Activated CD4-positive, alpha-beta memory T cell treated with anti-CD3 and anti-CD28 coated beads, Interleukin-2, amount 10 ng/mL, durations not matched to agents 7 days and 5 days (primary cell): ENCODE measurements at regions of chr16 and their contacts with region 1.

Region 1: DNA sequence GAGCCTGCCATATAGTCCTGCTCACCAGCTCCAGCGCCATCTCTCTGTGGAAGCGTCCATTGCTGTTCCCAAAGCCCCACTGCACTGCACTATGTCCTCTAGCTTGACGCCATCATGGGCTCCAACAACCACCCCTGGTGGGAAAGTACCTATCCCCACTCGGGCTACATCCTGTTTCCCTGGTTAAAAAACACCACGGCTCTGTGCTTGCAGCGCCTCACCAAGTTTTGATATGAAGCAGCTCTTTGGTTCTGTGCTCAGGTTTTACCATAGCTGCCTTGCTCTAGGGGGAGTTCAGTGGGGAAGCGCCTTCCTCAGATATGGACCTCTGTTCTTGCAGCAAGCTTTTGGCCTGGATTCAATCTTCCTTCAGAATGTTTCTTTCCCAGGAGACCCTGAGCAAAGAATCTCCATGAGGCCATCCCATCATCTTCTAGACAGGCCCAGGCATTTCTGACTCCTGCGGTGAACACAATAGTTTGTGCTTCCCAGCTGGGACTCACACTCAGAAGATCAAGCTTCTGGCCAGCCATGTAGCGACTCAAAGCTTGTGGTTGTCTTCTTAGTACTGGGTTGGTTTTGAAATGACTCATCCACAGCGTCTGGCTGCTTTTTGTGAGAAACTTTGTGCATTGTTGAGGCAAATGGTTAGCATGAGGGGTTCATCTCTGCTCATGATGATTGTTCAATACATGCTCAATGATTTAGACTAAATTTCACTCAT is 39.5 kb downstream of the DYNLRB2 start:
- DNase-seq: peak; percentile 85
- H3K4me3 Mint-ChIP-seq: peak overlapping the region; percentile 69
- H3K27ac Mint-ChIP-seq: peak overlapping the region; percentile 99
- H3K4me1 Mint-ChIP-seq: peaks cover 64% of the 10 kb centered on the region
- H3K27me3 Mint-ChIP-seq: no peaks in the 10 kb centered on the region

Region 2: DNA sequence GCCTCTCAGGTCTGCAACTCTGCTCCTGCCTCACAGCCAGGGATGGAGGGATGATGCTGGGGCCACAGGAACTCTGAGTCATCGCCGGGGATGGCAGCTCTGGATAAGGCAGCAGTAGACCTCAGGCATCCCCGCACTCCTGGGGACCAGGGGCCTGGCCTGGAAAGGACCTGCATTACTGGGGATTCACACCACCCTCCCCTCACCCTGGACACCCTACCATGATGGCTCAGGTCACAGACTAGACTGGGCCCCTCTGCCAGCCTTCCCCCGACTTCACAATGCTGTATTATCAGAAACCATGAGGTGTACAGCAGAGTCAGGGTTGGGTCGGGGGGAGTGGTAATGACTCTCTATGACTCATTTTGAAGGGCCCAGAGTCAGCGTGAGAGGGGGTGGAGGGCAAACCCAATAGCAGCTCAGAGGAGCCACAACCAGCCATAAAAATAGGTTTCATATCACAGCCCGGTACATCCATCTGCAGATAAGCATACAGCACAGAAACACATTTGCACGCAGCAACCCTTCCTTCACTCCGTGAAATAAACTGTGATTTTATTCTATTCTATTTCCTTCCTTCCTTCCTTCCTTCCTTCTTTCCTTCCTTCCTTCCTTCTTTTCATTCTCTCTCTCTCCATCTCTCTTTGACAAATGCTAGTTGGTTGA is 10.7 kb before region 1 on chr16:
- CTCF ChIA-PET with region 1: interaction called, 8 read pairs
- POLR2A ChIA-PET with region 1: interaction called, 29 read pairs
- DNase-seq: peak; percentile 82
- H3K4me3 Mint-ChIP-seq: peak overlapping the region; percentile 11
- H3K27ac Mint-ChIP-seq: peak overlapping the region; percentile 83
- H3K4me1 Mint-ChIP-seq: peaks cover 51% of the 10 kb centered on the region
- H3K27me3 Mint-ChIP-seq: peaks cover 2% of the 10 kb centered on the region

Region 3: GRCh38 chr16:80591071-80591915 is 11.0 kb after region 1 on chr16:
- CTCF ChIA-PET with region 1: interaction called, 24 read pairs
- POLR2A ChIA-PET with region 1: interaction called, 68 read pairs
- DNase-seq: peak; percentile 51
- H3K4me3 Mint-ChIP-seq: peak overlapping the region; percentile 2
- H3K27ac Mint-ChIP-seq: peak overlapping the region; percentile 4
- H3K4me1 Mint-ChIP-seq: peaks cover 35% of the 10 kb centered on the region
- H3K27me3 Mint-ChIP-seq: peaks cover 46% of the 10 kb centered on the region

Region 4: DNA sequence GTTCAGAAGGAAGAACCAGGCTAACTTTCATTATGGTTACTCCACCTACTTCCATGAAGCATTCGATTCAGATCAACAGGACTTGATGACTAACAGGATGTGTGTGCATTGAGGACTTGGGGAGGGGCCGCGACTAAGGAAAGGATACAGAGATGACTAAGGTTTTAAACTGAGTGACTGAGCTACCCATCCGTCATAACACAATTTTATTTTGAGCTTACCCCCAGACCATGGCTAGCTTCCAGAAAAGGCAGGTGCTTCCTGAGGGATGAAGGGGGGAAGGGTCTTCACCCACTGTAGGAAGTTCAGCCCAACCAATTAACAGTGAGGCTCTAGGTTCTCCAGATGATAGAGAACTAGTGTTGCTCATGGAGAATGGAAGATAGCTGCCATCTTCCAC is 226.7 kb after region 1 on chr16:
- CTCF ChIA-PET with region 1: no interaction called
- POLR2A ChIA-PET with region 1: interaction called, 13 read pairs
- DNase-seq: peak; percentile 80
- H3K4me3 Mint-ChIP-seq: peak overlapping the region; percentile 40
- H3K27ac Mint-ChIP-seq: peak overlapping the region; percentile 92
- H3K4me1 Mint-ChIP-seq: peaks cover 44% of the 10 kb centered on the region
- H3K27me3 Mint-ChIP-seq: no peaks in the 10 kb centered on the region